ENCODE measurements at regions of chr15 and their contacts with region 1.

Region 1: DNA sequence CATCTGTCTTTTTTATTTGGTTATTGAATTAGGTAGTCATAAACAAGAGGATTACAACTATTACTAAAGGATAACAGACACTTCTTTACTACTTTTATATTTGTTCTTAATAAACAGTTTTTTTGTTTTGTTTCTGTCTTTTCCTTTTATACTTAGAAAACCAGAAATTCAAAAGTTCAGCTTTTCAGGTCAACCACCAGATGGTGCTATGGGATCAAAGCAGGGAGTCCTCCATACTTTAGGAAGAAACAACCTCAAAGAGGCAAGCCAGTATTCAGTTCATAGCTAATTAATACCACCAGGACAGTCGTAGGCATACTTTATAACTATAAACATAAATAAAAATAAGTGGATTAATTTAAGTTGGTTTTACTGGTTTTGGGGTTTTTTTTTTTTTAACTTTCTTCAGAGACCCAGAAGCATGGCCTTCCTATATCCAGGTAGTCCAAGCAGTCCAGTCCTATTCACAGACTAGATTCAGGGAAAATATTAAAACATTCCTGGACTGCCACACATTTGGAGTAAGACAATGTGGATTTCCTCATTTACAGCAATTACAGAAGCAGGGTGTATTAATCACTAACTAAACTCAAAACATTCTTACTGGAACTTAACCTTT is 16.0 kb upstream of the EID1 start:
- DNase-seq: no peak
- H3K4me3 ChIP-seq: no peak overlapping the region
- H3K27ac ChIP-seq: no peak overlapping the region
- H3K4me1 ChIP-seq: peaks cover 0 to 18% (median 7%) of the 10 kb centered on the region in 4 donors
- H3K27me3 ChIP-seq: no peaks in the 10 kb centered on the region
- CTCF ChIP-seq: peak; percentile 52 to 84 (median 76)
- EP300 ChIP-seq: no peak
- POLR2A ChIP-seq: no peak

Region 2: DNA sequence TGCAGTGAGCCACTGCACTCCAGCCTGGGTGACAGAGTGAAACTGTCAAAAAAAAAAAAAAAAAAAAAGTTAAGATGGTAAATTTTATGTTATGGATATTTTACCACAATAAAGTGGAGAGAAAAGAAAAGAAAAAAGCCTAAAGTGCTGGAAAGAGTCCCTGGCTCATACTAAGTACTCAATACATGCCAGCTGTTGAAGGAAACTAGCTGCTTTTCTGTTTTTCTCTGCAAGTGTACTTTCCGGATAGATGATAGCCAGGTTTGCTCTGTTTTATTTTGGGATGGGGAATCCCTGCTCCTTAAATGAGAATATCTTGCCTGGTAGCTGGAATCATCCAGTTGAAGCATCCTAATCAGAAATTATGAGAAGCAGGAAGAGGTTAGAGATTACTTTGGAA is 26.9 kb after region 1 on chr15:
- intact Hi-C with region 1: no loop called
- DNase-seq: no peak
- H3K4me3 ChIP-seq: no peak overlapping the region
- H3K27ac ChIP-seq: peak overlapping the region; percentile 34 to 70 (median 40)
- H3K4me1 ChIP-seq: peaks cover 0 to 8% (median 2%) of the 10 kb centered on the region in 4 donors
- H3K27me3 ChIP-seq: no peaks in the 10 kb centered on the region
- CTCF ChIP-seq: no peak
- EP300 ChIP-seq: no peak
- POLR2A ChIP-seq: no peak

Region 3: GRCh38 chr15:48963524-48964113 is 101.7 kb after region 1 on chr15 and contains the start of gene SHC4:
- intact Hi-C with region 1: loop called (anchors 5 kb)
- DNase-seq: peak; percentile 87
- H3K4me3 ChIP-seq: peak within 1 kb of the TSS; percentile 33 to 56 (median 52)
- H3K27ac ChIP-seq: peak within 1 kb of the TSS; percentile 9 to 50 (median 36)
- H3K4me1 ChIP-seq: peaks cover 0 to 23% (median 20%) of the 10 kb centered on the region in 4 donors
- H3K27me3 ChIP-seq: no peaks in the 10 kb centered on the region
- CTCF ChIP-seq: peak in 1 of 4 experiments; percentile 18
- EP300 ChIP-seq: no peak
- POLR2A ChIP-seq: no peak
- total RNA-seq, gene SHC4: 2.1 to 4.6 (median 2.6) TPM

Region 4: GRCh38 chr15:48975472-48976419 is 113.8 kb after region 1 on chr15:
- intact Hi-C with region 1: loop called (anchors 2 kb)
- DNase-seq: peak; percentile 88
- H3K4me3 ChIP-seq: peak overlapping the region; percentile 25 to 57 (median 50)
- H3K27ac ChIP-seq: peak overlapping the region; percentile 60 to 79 (median 71)
- H3K4me1 ChIP-seq: peaks cover 0 to 13% (median 6%) of the 10 kb centered on the region in 4 donors
- H3K27me3 ChIP-seq: no peaks in the 10 kb centered on the region
- CTCF ChIP-seq: peak in 3 of 4 experiments; percentile 23 to 97 (median 41)
- EP300 ChIP-seq: no peak
- POLR2A ChIP-seq: no peak

Region 5: GRCh38 chr15:49046220-49047102 is 184.5 kb after region 1 on chr15 and contains the start of gene SECISBP2L:
- intact Hi-C with region 1: loop called (anchors 5 kb)
- DNase-seq: peak; percentile 96
- H3K4me3 ChIP-seq: peak within 1 kb of the TSS; percentile 91 to 99 (median 95)
- H3K27ac ChIP-seq: peak within 1 kb of the TSS; percentile 91 to 95 (median 93)
- H3K4me1 ChIP-seq: peaks cover 0 to 40% (median 36%) of the 10 kb centered on the region in 4 donors
- H3K27me3 ChIP-seq: no peaks in the 10 kb centered on the region
- CTCF ChIP-seq: no peak
- EP300 ChIP-seq: peak in 1 of 4 donors; percentile 35
- POLR2A ChIP-seq: peak; percentile 80 to 89
- total RNA-seq, gene SECISBP2L: 34.1 to 47.6 (median 41.2) TPM

Region 6: GRCh38 chr15:49148298-49148697 is 286.4 kb after region 1 on chr15:
- intact Hi-C with region 1: loop called (anchors 2 kb)
- DNase-seq: no peak
- H3K4me3 ChIP-seq: no peak overlapping the region
- H3K27ac ChIP-seq: no peak overlapping the region
- H3K4me1 ChIP-seq: peaks cover 0 to 64% (median 27%) of the 10 kb centered on the region in 4 donors
- H3K27me3 ChIP-seq: no peaks in the 10 kb centered on the region
- CTCF ChIP-seq: no peak
- EP300 ChIP-seq: no peak
- POLR2A ChIP-seq: no peak

Region 7: DNA sequence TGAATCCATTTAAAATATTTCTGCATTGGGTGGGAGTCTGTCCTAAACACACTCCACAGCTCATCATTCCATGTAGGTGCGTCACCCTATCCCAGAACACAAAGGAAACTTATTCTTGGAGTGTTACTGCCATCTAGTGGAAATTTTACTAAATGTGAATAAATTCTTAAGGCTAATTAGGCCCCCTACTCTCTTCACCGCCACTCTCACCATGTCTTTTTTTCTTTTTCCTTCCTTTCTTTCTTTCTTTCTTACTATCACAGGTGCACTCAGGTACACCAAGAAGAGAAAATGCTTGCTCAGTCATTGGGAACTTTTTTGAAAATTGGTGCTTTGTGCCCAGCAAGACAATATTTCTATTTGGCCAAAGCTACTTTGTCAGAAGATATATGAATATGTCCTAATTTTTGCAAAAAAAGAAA is 1283.5 kb after region 1 on chr15:
- intact Hi-C with region 1: loop called (anchors 2 kb)
- DNase-seq: no peak
- H3K4me3 ChIP-seq: no peak overlapping the region
- H3K27ac ChIP-seq: no peak overlapping the region
- H3K4me1 ChIP-seq: peaks cover 0 to 15% (median 5%) of the 10 kb centered on the region in 4 donors
- H3K27me3 ChIP-seq: no peaks in the 10 kb centered on the region
- CTCF ChIP-seq: peak; percentile 43 to 62 (median 53)
- EP300 ChIP-seq: no peak
- POLR2A ChIP-seq: no peak